ENCODE measurements at regions of chr2 and their contacts with region 1.

Region 1: GRCh38 chr2:64819774-64820696 is 166.3 kb upstream of the SERTAD2 start:
- DNase-seq: peak in 9 of 10 donors; percentile 7 to 84 (median 58)
- ATAC-seq: peak; percentile 97 to 98
- H3K4me3 Mint-ChIP-seq: peak overlapping the region; percentile 44 to 89 (median 76)
- H3K27ac Mint-ChIP-seq: peak overlapping the region; percentile 91 to 100 (median 97)
- H3K4me1 Mint-ChIP-seq: peaks cover 18 to 55% (median 42%) of the 10 kb centered on the region in 4 donors
- H3K27me3 Mint-ChIP-seq: no peaks in the 10 kb centered on the region

Region 2: GRCh38 chr2:64644177-64645004 is 175.6 kb before region 1 on chr2:
- POLR2A ChIA-PET with region 1: interaction called, 13 read pairs
- DNase-seq: peak; percentile 40 to 76 (median 64)
- ATAC-seq: peak; percentile 71 to 81
- H3K4me3 Mint-ChIP-seq: peak overlapping the region; percentile 81 to 96 (median 91)
- H3K27ac Mint-ChIP-seq: peak overlapping the region; percentile 88 to 97 (median 94)
- H3K4me1 Mint-ChIP-seq: peaks cover 31 to 97% (median 89%) of the 10 kb centered on the region in 4 donors
- H3K27me3 Mint-ChIP-seq: no peaks in the 10 kb centered on the region

Region 3: GRCh38 chr2:64767670-64768468 is 52.2 kb before region 1 on chr2:
- POLR2A ChIA-PET with region 1: interaction called, 25 read pairs
- DNase-seq: peak; percentile 51 to 85 (median 57)
- ATAC-seq: peak; percentile 73 to 75
- H3K4me3 Mint-ChIP-seq: peak overlapping the region; percentile 92 to 99 (median 94)
- H3K27ac Mint-ChIP-seq: peak overlapping the region; percentile 90 to 99 (median 96)
- H3K4me1 Mint-ChIP-seq: peaks cover 11 to 26% (median 17%) of the 10 kb centered on the region in 4 donors
- H3K27me3 Mint-ChIP-seq: no peaks in the 10 kb centered on the region

Region 4: GRCh38 chr2:64797881-64798575 is 22.0 kb before region 1 on chr2:
- POLR2A ChIA-PET with region 1: no interaction called
- DNase-seq: no peak
- ATAC-seq: no peak
- H3K4me3 Mint-ChIP-seq: no peak overlapping the region
- H3K27ac Mint-ChIP-seq: no peak overlapping the region
- H3K4me1 Mint-ChIP-seq: peaks cover 0 to 8% (median 0%) of the 10 kb centered on the region in 4 donors
- H3K27me3 Mint-ChIP-seq: no peaks in the 10 kb centered on the region

Region 5: DNA sequence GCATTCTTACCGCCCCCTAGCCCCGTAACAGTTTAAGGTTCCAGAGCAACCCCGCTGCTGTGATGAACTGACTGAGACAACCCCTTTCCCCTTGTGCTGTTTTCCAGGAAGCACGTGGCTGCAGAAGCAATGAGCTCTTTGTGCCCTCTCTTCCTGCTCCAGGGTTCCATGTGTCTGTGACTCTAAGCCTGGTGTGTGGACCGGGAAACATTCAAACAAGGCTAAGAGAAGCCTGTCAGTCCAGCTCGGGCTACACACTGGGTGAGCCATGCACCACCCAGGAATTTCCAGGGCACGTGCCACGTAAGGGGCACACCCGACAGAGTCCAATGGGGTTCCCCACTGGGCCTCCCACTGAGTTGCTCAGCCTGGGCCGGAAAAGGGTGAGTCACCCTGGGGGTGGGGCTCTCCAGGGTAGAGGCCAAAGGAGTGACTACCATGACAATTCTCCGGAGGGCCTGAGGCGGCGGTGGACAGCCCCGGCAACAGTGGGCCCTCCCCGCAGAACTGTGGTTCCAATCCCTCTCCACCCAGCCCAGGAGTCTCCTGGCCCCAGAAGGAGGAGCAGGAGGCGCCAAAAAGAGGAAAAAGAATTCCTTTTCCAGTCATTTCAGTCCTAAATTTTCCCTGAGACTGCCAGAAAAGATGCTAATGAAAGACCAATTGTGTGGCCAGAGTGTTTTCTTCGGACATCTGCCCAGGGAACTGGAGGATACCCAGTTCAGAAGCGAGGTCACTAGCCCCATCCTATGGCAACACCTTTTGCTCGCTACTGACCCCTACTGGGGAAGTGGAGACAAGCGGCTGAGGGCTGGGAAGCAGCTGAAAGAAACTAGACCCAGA is 11.3 kb after region 1 on chr2:
- POLR2A ChIA-PET with region 1: interaction called, 17 read pairs
- DNase-seq: peak; percentile 57 to 91 (median 78)
- ATAC-seq: peak; percentile 95 to 96
- H3K4me3 Mint-ChIP-seq: peak overlapping the region in 5 of 10 donors; percentile 17 to 50 (median 33)
- H3K27ac Mint-ChIP-seq: peak overlapping the region in 6 of 10 donors; percentile 19 to 56 (median 40)
- H3K4me1 Mint-ChIP-seq: peaks cover 0 to 17% (median 5%) of the 10 kb centered on the region in 4 donors
- H3K27me3 Mint-ChIP-seq: peaks cover 0 to 7% (median 0%) of the 10 kb centered on the region in 5 donors

Region 6: DNA sequence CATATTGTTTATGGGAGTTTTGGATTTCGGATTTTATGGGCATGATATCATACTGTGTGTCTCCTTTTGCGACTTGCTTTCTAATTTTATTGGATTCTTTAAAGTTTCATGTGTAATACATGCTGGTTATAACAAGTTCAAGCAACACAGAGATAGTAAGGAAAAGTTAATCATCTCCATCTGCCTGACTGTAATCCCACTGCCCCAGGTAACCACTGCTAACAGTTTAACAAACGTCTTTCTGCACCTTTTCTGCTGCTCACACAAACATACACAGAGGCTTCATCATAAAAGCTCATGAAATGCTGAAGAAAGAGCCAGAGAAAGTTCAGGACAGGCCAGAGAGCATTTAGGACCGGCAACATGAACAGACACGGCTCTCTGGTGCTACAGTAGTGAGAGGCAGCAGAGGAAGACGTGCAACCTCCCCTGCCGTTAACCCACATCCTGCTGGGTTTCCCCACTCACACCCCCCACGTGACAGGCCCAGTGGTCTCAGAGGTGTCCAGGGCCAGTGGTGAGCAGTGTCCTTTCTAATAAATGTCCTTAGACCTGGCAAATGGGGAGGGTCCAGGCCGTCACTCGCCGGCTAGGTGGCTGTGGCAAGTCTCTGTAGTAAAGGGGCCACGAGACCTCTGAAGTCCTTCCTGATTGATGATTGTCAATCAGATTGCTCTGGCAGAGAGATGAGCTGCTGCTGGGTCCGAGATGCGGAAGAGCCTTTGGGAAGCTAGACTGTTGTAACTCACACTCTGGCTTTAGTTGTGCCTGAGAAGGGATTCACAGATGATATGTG is 126.1 kb after region 1 on chr2:
- POLR2A ChIA-PET with region 1: no interaction called
- DNase-seq: peak in 9 of 10 donors; percentile 1 to 68 (median 42)
- ATAC-seq: peak; percentile 94 to 99
- H3K4me3 Mint-ChIP-seq: peak overlapping the region; percentile 63 to 84 (median 74)
- H3K27ac Mint-ChIP-seq: peak overlapping the region; percentile 59 to 90 (median 84)
- H3K4me1 Mint-ChIP-seq: peaks cover 24 to 52% (median 31%) of the 10 kb centered on the region in 4 donors
- H3K27me3 Mint-ChIP-seq: peaks cover 0 to 1% (median 0%) of the 10 kb centered on the region in 5 donors